ENCODE measurements at regions of chr9 and their contacts with region 1.

Region 1: GRCh38 chr9:4984621-4985385 is at the start of gene JAK2:
- DNase-seq: peak; percentile 95
- H3K4me3 ChIP-seq: peak within 1 kb of the TSS; percentile 78
- H3K27ac ChIP-seq: peak within 1 kb of the TSS; percentile 87
- H3K4me1 ChIP-seq: peaks cover 23% of the 10 kb centered on the region
- H3K27me3 ChIP-seq: no peaks in the 10 kb centered on the region
- CTCF ChIP-seq: peak; percentile 55
- total RNA-seq, gene JAK2: 7.3 and 10.5 TPM in 2 replicates

Region 2: DNA sequence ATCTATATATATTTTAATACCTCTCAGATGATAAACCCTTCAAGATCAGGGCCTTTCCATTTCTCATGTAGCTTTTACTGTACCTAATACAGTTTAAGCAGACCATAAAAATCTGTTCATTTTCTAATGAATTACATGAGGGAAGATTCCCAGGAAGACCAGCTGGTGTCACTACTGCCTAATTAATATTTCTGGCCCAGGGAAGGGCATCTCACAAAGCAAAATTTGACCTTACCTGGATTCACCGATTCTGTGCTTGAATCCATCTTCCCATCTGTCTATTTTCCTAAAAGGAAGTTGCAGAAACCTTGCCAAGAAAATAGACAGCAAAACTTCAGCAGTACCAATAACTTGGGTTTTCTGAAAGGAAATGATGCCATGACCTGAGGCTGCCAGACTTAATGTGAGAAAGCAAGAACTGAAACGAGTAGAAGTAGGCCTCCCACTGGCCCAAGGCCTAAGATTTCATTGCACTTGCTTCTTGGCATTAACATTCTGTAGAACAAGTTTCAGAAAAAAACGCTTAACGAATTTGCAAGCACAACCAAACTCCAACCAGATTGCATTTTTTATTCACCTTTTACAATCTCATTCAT is 602.0 kb before region 1 on chr9:
- CTCF ChIA-PET with region 1: no interaction called
- POLR2A ChIA-PET with region 1: no interaction called
- intact Hi-C with region 1: loop called (anchors 5 kb)
- DNase-seq: peak; percentile 63
- H3K4me3 ChIP-seq: no peak overlapping the region
- H3K27ac ChIP-seq: no peak overlapping the region
- H3K4me1 ChIP-seq: peaks cover 10% of the 10 kb centered on the region
- H3K27me3 ChIP-seq: no peaks in the 10 kb centered on the region
- CTCF ChIP-seq: peak; percentile 75

Region 3: GRCh38 chr9:4792572-4793458 is 192.0 kb before region 1 on chr9 and contains the start of gene RCL1:
- CTCF ChIA-PET with region 1: no interaction called
- POLR2A ChIA-PET with region 1: no interaction called
- intact Hi-C with region 1: loop called (anchors 10 kb)
- DNase-seq: peak; percentile 98
- H3K4me3 ChIP-seq: peak within 1 kb of the TSS; percentile 93
- H3K27ac ChIP-seq: peak within 1 kb of the TSS; percentile 78
- H3K4me1 ChIP-seq: peaks cover 10% of the 10 kb centered on the region
- H3K27me3 ChIP-seq: no peaks in the 10 kb centered on the region
- CTCF ChIP-seq: no peak
- total RNA-seq, gene RCL1: 29.1 and 31.2 TPM in 2 replicates

Region 4: DNA sequence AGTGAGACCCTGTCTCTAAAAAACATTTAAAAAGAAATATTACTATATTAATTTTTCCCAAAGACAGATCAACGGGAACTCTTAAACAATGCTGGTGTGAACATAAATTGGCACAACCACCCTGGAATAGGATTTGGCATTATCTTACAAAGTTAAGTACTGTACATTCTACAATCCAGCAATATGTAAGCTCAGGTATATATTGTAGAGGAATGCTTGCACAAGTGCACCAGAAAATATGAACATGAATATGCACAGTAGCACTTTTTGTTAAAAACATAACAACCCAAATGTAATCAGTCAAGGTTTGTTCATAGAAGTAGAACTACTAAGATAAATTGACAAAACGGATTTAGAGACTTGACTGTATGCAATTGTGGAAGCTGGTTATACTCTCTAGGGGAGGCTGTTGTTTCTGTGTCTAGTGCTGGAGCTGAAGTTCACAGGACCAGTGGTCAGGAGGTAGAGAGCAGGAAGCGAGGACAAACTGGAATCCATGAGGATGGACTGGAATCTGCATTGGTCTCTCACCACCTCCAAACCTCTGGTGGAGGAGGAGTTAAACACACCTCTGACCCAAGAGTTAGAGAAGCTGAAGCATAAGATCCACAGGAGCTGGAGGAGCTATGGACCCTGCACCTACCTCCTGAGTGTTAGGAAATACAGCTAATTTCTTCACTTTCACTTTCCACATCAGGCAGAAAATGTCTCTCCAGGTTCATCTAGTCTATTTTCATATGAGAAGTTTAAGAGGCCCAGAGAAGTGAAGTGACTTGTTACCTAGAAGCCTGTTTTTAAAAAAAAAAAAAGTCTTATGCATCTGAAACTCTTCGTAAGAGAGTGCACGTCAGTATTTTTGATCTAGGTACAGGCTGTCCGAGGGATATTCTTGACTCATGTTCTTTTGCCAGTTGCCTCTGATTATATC is 623.8 kb after region 1 on chr9:
- CTCF ChIA-PET with region 1: no interaction called
- POLR2A ChIA-PET with region 1: no interaction called
- intact Hi-C with region 1: loop called (anchors 10 kb)
- DNase-seq: no peak
- H3K4me3 ChIP-seq: no peak overlapping the region
- H3K27ac ChIP-seq: no peak overlapping the region
- H3K4me1 ChIP-seq: no peaks in the 10 kb centered on the region
- H3K27me3 ChIP-seq: no peaks in the 10 kb centered on the region
- CTCF ChIP-seq: no peak